WTC11 (cell line): ENCODE measurements at regions of chr7 and their contacts with region 1.

Region 1: GRCh38 chr7:23462846-23463245 is 7.4 kb downstream of the IGF2BP3 start:
- DNase-seq: no peak
- ATAC-seq: no peak
- H3K4me3 Mint-ChIP-seq: peak overlapping the region; percentile 68
- H3K27ac Mint-ChIP-seq: peak overlapping the region; percentile 79
- H3K4me1 Mint-ChIP-seq: peaks cover 70% of the 10 kb centered on the region
- H3K27me3 Mint-ChIP-seq: no peaks in the 10 kb centered on the region
- CTCF ChIP-seq: no peak

Region 2: GRCh38 chr7:23357190-23358093 is 105.4 kb before region 1 on chr7:
- CTCF ChIA-PET with region 1: interaction called, 10 read pairs
- POLR2A ChIA-PET with region 1: no interaction called
- DNase-seq: no peak
- ATAC-seq: peak; percentile 38
- H3K4me3 Mint-ChIP-seq: no peak overlapping the region
- H3K27ac Mint-ChIP-seq: peak overlapping the region; percentile 67
- H3K4me1 Mint-ChIP-seq: peaks cover 9% of the 10 kb centered on the region
- H3K27me3 Mint-ChIP-seq: no peaks in the 10 kb centered on the region
- CTCF ChIP-seq: no peak

Region 3: GRCh38 chr7:23449941-23450340 is 12.9 kb before region 1 on chr7:
- CTCF ChIA-PET with region 1: interaction called, 11 read pairs
- POLR2A ChIA-PET with region 1: interaction called, 3 read pairs
- DNase-seq: no peak
- ATAC-seq: no peak
- H3K4me3 Mint-ChIP-seq: no peak overlapping the region
- H3K27ac Mint-ChIP-seq: peak overlapping the region; percentile 58
- H3K4me1 Mint-ChIP-seq: peaks cover 60% of the 10 kb centered on the region
- H3K27me3 Mint-ChIP-seq: no peaks in the 10 kb centered on the region
- CTCF ChIP-seq: no peak

Region 4: DNA sequence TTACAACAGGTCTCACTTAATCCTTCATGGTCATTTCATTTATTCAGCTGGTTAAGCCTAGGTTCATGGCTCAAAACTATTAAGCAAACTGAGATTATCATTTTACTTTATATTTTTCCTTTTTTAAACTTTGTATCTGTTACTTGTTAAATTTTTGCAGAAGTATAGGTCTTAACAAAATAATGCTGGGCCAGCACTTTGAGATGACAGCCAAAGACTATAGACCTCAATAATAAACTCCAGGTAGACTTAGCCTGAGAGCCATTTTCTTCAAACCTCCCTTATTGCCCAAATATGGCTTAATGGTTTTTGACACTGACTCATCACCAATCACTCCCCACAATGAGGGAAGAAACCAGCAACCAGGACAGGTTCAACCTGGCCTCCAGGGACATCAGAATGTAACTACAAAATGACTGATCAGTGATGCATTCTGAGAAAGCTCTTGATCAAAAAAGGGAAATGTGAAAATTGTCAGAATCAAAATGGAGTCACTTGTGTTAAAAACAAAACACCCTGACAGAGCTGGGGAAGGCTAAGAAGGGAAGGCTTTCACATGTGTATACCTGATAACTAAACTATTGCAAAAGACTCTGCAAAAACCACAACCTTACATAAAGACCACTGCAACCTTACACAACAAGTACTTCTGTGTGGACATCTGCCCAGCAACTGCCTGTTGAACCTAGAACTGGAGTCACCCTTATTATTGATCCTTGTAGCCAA is 132.2 kb after region 1 on chr7:
- CTCF ChIA-PET with region 1: no interaction called
- POLR2A ChIA-PET with region 1: no interaction called
- DNase-seq: no peak
- ATAC-seq: no peak
- H3K4me3 Mint-ChIP-seq: no peak overlapping the region
- H3K27ac Mint-ChIP-seq: no peak overlapping the region
- H3K4me1 Mint-ChIP-seq: peaks cover 17% of the 10 kb centered on the region
- H3K27me3 Mint-ChIP-seq: peaks cover 29% of the 10 kb centered on the region
- CTCF ChIP-seq: no peak

Region 5: DNA sequence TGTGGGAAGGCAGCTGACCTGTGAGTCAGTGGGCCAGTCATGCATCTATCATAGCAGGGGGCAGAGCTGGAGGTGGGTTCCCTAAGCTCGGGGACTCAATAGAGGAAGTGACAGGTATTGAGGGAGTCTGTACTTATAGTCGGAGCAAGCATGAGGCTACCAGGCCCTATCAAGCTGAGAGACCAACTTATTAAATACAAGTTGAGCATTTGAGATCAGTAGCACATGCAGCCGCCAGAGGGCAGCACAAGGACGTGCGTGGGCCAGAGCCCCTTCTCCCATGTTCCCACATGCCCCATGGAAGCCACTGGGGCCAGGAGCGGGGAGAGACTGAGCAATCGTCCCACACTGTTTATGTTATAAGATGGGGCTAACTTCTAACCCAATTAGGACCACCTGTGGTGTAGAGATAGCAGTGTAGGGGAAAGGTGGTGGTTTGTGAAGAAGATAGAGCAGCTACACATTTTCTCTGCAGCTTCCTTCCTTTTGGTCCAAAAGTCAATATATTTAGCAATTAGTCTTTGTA is 234.1 kb after region 1 on chr7:
- CTCF ChIA-PET with region 1: no interaction called
- POLR2A ChIA-PET with region 1: no interaction called
- DNase-seq: peak; percentile 85
- ATAC-seq: peak; percentile 99
- H3K4me3 Mint-ChIP-seq: no peak overlapping the region
- H3K27ac Mint-ChIP-seq: no peak overlapping the region
- H3K4me1 Mint-ChIP-seq: no peaks in the 10 kb centered on the region
- H3K27me3 Mint-ChIP-seq: no peaks in the 10 kb centered on the region
- CTCF ChIP-seq: peak; percentile 86